Mammary epithelial cell (primary cell): ENCODE measurements at regions of chr15 and their contacts with region 1.

Region 1: DNA sequence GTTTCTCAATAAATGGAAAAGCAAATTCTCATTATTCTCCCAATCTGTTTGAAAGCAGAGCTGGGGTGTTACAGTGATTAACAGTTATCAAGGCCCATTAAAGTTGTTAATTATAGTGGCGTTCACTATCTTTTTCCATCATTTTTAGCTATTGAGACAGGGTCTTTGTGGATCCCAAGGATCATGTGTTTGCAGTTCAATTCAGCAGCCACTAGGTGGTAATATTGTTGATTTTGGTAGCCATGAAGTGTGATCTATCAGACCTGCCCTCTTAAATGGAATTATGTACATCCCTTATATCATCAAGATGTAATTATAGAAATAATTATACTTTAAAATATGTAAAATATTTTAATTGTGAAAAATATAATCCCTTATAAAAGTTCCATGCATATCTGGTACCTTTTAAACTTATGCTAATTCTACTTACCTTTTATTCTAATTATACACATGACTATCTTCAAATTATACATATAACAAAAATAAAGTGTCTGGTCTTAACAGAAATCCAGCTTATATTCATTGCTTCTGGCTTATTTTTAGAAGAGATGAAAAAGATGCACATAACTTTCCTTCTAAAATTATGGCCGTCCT is 126.4 kb downstream of the GREM1 start:
- DNase-seq: peak; percentile 14
- H3K4me3 ChIP-seq: no peak overlapping the region
- H3K27ac ChIP-seq: no peak overlapping the region
- H3K4me1 ChIP-seq: no peaks in the 10 kb centered on the region
- H3K27me3 ChIP-seq: no peaks in the 10 kb centered on the region
- CTCF ChIP-seq: peak; percentile 63 to 76

Region 2: DNA sequence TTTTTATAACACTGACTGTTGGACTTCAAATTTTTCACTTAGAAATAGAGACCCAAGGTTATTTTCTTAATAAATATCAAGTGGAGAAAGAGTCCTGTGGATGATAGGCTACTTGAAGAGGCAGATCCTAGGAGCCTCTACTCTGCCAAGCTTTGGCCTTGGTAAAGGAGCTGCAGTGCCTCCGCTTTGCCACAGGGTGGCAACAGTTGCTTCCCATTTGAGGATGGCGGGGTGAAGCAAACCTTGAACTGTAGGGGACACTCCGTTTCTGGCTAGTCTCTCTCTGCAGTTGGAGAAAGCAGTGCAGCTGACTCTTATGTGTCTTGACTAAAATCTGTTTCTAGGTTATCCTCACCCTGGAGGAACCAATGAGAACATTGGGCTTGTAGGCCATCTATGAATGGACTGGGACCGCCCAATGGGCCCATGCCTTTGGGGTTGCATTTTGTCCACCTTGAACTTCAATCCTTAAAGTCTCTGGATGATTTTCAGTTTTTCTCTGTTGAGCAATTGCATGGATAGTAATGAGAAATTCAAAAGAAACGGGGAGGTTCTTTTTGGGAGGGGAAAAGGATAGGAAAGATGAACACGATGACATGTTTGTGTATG is 192.9 kb before region 1 on chr15:
- CTCF ChIA-PET with region 1: no interaction called
- dilution Hi-C with region 1: no loop called
- in situ Hi-C with region 1: loop called in 1 of 2 experiments (anchors 10 kb)
- intact Hi-C with region 1: no loop called
- DNase-seq: peak; percentile 47
- H3K4me3 ChIP-seq: no peak overlapping the region
- H3K27ac ChIP-seq: no peak overlapping the region
- H3K4me1 ChIP-seq: peaks cover 22% of the 10 kb centered on the region
- H3K27me3 ChIP-seq: no peaks in the 10 kb centered on the region
- CTCF ChIP-seq: peak; percentile 98 to 99

Region 3: GRCh38 chr15:32936283-32936918 is 92.2 kb after region 1 on chr15:
- CTCF ChIA-PET with region 1: interaction called, 57 read pairs
- dilution Hi-C with region 1: loop called (anchors 5 kb)
- in situ Hi-C with region 1: no loop called
- intact Hi-C with region 1: loop called (anchors 1 kb)
- DNase-seq: peak; percentile 11
- H3K4me3 ChIP-seq: no peak overlapping the region
- H3K27ac ChIP-seq: no peak overlapping the region
- H3K4me1 ChIP-seq: no peaks in the 10 kb centered on the region
- H3K27me3 ChIP-seq: no peaks in the 10 kb centered on the region
- CTCF ChIP-seq: peak; percentile 73 to 74

Region 4: DNA sequence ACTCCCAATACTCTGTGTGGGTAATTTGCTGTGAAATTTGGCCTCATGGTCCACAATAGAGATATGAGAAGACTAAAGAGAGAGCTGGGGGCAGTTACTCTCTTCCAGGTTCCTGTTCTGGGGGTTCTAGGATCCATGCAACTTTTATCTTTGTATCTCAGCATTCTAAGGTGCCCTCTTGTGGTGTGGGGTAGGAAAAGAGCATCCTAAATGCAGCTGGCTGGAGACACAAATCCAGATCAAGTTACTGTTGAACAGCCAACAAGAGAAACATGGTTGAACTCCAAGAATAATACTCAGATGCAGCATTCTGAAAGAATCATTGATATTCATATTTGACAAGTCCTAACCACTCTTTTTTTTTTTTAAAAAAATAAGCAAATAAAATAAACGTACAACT is 111.8 kb after region 1 on chr15:
- CTCF ChIA-PET with region 1: interaction called, 3 read pairs
- dilution Hi-C with region 1: no loop called
- in situ Hi-C with region 1: loop called in 1 of 2 experiments (anchors 10 kb)
- intact Hi-C with region 1: loop called (anchors 1 kb)
- DNase-seq: peak; percentile 25
- H3K4me3 ChIP-seq: no peak overlapping the region
- H3K27ac ChIP-seq: no peak overlapping the region
- H3K4me1 ChIP-seq: no peaks in the 10 kb centered on the region
- H3K27me3 ChIP-seq: no peaks in the 10 kb centered on the region
- CTCF ChIP-seq: peak; percentile 54 to 75

Region 5: DNA sequence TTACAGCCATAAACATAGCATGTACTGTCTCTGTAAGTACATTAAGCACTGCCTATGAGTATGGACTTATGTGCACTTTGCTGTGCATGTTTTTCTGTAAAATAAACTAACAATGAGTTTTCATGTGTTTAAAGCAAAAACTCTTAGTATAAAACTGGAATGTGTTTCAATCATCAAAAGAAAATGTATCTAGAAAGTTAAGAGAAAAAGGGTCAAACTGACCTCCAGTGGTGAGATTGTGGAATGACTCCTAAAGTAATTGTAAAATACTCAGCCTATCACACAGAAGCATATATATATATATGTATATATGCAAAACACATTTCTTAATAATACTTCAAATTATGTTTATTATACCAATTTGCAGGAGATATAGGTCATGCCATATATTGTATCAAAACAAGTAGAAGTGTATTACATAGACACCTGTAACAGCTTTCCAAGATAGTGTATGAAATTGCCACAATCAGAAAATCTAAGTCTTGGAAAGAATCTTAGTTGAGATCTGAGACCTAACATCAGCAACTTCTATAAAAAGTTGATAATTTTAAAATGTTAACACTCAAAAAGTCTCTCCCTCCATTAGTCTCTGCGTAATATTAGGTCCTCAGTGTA is 150.7 kb after region 1 on chr15:
- CTCF ChIA-PET with region 1: no interaction called
- dilution Hi-C with region 1: no loop called
- in situ Hi-C with region 1: no loop called
- intact Hi-C with region 1: loop called (anchors 1 kb)
- DNase-seq: no peak
- H3K4me3 ChIP-seq: no peak overlapping the region
- H3K27ac ChIP-seq: no peak overlapping the region
- H3K4me1 ChIP-seq: no peaks in the 10 kb centered on the region
- H3K27me3 ChIP-seq: no peaks in the 10 kb centered on the region
- CTCF ChIP-seq: peak; percentile 56 to 67